ENCODE measurements at regions of chr16 and their contacts with region 1.

Region 1: DNA sequence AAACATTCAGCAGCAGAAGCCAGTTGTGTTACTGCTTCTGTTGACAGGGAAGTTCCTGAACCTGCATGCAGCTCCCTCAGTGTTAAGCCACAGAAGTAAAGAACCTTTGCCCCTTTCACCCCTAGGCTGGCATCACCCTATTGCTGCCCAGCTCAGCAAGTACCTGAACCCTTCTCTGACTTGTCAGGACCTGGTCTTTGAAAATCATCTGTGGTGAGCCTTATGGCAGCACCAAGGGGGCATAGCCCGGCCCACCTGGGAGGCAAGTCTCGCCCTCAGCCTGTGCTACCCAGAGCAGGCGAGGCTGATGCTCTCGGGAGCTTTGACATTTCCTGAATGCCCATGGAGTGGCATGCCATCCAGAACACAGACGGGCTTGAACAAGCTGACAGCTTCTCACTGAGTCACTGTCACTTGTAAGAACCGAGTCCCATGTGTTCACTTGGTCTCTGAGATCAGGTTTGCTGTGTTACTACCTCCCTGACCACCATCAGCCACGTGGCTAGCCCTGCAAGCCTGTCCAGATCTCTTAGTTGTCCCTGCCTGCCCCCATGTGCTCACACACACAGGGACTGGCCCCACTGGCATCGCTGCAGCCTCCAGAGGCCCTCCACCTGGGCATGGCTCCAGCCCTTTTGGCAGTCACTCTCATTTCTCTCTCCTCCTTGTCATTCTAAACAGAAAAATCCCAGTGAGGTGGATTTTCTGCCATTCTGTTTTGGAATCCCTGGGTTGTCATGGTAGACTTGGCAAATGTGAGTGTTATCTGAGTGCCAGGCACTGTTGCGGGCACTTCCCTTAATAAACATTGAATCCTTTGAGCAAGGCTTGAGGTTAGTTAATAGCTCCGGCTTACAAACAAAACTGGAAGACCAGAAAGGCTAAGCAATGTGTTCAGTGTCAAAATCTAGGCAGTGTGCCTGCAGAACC is 2.9 kb upstream of the CARMIL2 start:
- DNase-seq: no peak
- H3K4me3 Mint-ChIP-seq: no peak overlapping the region
- H3K27ac Mint-ChIP-seq: no peak overlapping the region
- H3K4me1 Mint-ChIP-seq: no peaks in the 10 kb centered on the region
- H3K27me3 Mint-ChIP-seq: peaks cover 24% of the 10 kb centered on the region
- CTCF ChIP-seq: no peak

Region 2: DNA sequence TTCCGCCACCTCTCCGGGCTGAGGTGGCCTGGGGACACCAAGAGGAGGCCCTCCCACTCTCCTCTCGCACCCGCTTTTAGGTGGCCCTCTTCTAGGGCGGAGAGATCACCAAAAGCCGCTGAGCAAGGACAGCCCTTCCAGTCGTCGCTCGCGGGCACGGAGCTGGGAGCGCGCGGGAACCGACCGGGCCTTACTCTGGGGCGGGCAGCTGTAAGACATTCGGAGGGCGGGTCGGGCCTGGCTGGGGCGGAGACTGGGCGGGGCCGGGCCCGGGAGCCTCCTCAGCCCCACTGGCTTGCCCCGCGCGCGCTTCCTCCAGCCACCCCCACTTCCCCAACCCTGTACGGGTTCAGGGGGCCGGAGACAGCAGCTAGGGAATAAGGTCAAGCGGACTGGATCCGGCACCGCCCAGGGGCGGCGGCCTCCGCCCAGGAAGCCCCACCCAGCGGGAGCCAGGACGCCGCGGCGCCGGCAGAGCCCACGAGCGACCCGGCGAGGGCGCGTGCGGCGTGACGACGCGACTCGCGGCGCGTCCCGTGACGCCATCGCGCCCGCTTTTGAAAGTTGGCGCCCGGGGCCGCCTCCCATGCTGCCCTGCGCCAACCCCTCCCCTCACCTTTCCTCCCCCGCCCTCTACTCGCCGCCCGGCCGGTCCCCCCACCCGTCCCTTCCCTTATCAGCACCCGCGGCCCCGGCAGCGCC is 80.1 kb before region 1 on chr16:
- CTCF ChIA-PET with region 1: no interaction called
- intact Hi-C with region 1: loop called (anchors 5 kb)
- DNase-seq: peak; percentile 97
- H3K4me3 Mint-ChIP-seq: peak overlapping the region; percentile 95
- H3K27ac Mint-ChIP-seq: peak overlapping the region; percentile 93
- H3K4me1 Mint-ChIP-seq: peaks cover 23% of the 10 kb centered on the region
- H3K27me3 Mint-ChIP-seq: no peaks in the 10 kb centered on the region
- CTCF ChIP-seq: no peak

Region 3: GRCh38 chr16:67719048-67719777 is 77.2 kb after region 1 on chr16 and contains the start of gene GFOD2:
- CTCF ChIA-PET with region 1: no interaction called
- intact Hi-C with region 1: no loop called
- DNase-seq: peak; percentile 99
- H3K4me3 Mint-ChIP-seq: peak within 1 kb of the TSS; percentile 96
- H3K27ac Mint-ChIP-seq: peak within 1 kb of the TSS; percentile 80
- H3K4me1 Mint-ChIP-seq: peaks cover 24% of the 10 kb centered on the region
- H3K27me3 Mint-ChIP-seq: no peaks in the 10 kb centered on the region
- CTCF ChIP-seq: no peak
- total RNA-seq, gene GFOD2: 23.9 and 25.6 TPM in 2 replicates